Adrenal gland (tissue), 19 donors: ENCODE measurements at regions of chr13 and their contacts with region 1.

Region 1: GRCh38 chr13:99436686-99437416 is 64.4 kb upstream of the TM9SF2 start:
- DNase-seq: peak; percentile 79 to 95 (median 87)
- H3K4me3 ChIP-seq: peak overlapping the region in 1 of 4 donors; percentile 8
- H3K27ac ChIP-seq: no peak overlapping the region
- H3K4me1 ChIP-seq: peaks cover 0 to 15% of the 10 kb centered on the region in 2 donors
- H3K27me3 ChIP-seq: peaks cover 14% of the 10 kb centered on the region
- CTCF ChIP-seq: peak; percentile 99 to 100 (median 100)
- POLR2A ChIP-seq: no peak

Region 2: GRCh38 chr13:98798849-98799645 is 637.8 kb before region 1 on chr13:
- intact Hi-C with region 1: no loop called
- DNase-seq: peak in 1 of 7 donors; percentile 17
- H3K4me3 ChIP-seq: no peak overlapping the region
- H3K27ac ChIP-seq: no peak overlapping the region
- H3K4me1 ChIP-seq: no peaks in the 10 kb centered on the region
- H3K27me3 ChIP-seq: no peaks in the 10 kb centered on the region
- CTCF ChIP-seq: no peak
- POLR2A ChIP-seq: no peak

Region 3: DNA sequence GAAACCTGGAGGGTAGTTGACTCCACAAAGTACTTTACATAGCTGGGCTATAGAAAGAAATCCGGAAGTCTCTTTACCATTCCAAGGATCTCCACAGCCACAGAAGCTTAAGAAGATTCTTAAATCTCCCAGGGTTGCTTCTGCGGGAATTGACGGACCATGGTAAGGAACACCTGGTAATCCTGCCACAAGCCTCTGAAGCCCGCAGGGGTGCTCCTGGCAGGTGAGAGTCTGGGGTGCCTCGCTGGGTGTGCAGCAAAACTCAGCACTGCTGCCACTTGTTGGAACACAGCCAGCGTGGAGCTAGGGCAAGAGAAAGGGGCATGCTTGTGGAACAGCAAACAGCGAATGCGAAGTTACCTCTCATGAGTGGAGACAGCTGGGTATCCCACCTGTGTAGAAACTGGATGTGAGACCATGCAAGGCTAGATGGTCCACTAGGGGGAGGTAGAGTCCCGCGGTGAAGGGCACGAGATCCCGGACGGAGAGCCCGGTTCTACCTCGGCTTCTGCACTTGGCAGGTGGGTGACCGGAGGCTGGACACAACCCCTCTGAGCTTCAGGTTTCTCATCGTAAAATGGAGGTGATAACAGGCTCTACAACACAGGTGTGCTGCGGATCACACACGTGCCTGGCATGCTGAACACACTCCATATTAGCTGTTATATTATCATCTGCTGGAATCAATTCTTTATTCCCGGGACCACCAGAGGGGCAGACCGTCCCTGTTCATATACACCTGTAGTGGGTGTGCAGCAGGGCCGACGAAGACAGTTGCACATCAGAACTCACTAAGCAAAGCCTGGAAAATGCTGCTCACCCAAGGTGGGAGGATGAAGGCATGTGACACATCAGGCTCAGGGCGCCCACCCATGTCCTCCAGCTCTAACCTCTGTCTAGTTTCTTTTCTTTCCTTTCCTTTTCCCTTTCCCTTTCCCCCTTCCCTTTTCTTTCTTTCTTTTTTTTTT is 260.3 kb before region 1 on chr13:
- intact Hi-C with region 1: loop called (anchors 5 kb)
- DNase-seq: peak; percentile 55 to 86 (median 76)
- H3K4me3 ChIP-seq: no peak overlapping the region
- H3K27ac ChIP-seq: no peak overlapping the region
- H3K4me1 ChIP-seq: peaks cover 0 to 8% of the 10 kb centered on the region in 2 donors
- H3K27me3 ChIP-seq: no peaks in the 10 kb centered on the region
- CTCF ChIP-seq: peak; percentile 72 to 92 (median 86)
- POLR2A ChIP-seq: no peak

Region 4: GRCh38 chr13:99269627-99270241 is 167.1 kb before region 1 on chr13:
- intact Hi-C with region 1: loop called (anchors 5 kb)
- DNase-seq: peak in 4 of 7 donors; percentile 29 to 45 (median 32)
- H3K4me3 ChIP-seq: no peak overlapping the region
- H3K27ac ChIP-seq: peak overlapping the region in 2 of 5 donors; percentile 30 to 43
- H3K4me1 ChIP-seq: peaks cover 0 to 6% of the 10 kb centered on the region in 2 donors
- H3K27me3 ChIP-seq: no peaks in the 10 kb centered on the region
- CTCF ChIP-seq: peak; percentile 51 to 79 (median 71)
- POLR2A ChIP-seq: no peak

Region 5: GRCh38 chr13:99386911-99387788 is 49.7 kb before region 1 on chr13:
- intact Hi-C with region 1: loop called in 1 of 2 experiments (anchors 10 kb)
- DNase-seq: peak; percentile 62 to 80 (median 68)
- H3K4me3 ChIP-seq: no peak overlapping the region
- H3K27ac ChIP-seq: no peak overlapping the region
- H3K4me1 ChIP-seq: no peaks in the 10 kb centered on the region
- H3K27me3 ChIP-seq: no peaks in the 10 kb centered on the region
- CTCF ChIP-seq: peak; percentile 57 to 75 (median 70)
- POLR2A ChIP-seq: no peak